ENCODE measurements at regions of chr12 and their contacts with region 1.

Region 1: GRCh38 chr12:120200364-120200800 is 529 bp downstream of the RPLP0 start:
- DNase-seq: no peak

Region 2: DNA sequence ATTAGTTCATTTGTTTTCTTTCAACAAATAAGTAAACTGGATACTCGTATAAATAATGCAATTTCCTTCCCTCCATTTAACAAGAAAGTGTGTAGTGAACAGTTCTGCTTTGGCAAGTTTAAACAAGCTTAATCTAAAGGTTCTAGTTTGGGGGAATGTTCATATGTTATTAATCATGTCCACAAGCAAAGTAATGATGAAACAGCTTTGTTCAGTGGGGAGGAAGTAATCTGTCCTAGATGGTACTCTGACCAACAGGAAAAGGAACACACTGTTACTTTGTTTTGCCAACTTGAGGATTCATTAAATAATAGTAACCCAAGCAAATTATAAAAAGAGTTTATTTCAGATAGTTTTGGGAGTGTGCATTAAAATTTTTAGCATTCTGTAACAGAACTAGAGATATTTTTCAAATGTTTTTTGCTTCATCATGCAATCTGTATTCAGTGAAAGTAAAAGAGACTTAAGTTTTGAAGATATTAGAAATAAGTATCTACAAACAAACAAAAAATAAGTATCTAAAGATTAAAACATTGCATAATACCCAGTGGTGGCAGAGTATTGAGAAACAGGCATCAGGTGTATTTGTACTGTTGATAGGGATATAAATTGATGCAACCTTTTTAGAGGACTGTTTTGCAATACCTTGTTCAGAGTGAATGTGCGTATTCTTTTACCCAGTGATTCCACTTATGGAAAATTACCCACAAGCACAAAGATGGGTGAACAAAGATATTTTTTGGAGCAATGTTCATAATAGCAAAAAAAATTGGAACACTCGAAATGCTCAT is 145.0 kb before region 1 on chr12:
- CTCF ChIA-PET with region 1: no interaction called
- POLR2A ChIA-PET with region 1: no interaction called
- DNase-seq: no peak

Region 3: DNA sequence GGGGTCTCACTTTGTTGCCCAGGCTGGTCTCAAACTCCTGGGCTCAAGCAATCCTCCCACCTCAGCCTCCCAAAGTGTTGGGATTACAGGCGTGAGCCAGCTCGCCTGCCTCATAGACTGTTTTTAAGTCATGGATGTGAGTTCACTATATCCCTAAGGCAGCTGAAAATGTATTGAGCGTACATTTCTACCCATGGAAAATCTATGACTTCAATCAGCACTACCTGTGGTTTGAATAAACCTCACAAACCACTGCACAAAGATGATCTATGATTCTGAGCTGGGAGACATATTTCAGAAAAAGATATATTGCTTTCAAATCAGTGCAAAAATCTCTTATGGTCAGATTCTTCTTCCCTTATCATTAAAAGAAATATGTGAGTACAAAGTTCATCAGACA is 28.3 kb before region 1 on chr12:
- CTCF ChIA-PET with region 1: interaction called, 3 read pairs
- POLR2A ChIA-PET with region 1: interaction called, 16 read pairs
- DNase-seq: no peak

Region 4: DNA sequence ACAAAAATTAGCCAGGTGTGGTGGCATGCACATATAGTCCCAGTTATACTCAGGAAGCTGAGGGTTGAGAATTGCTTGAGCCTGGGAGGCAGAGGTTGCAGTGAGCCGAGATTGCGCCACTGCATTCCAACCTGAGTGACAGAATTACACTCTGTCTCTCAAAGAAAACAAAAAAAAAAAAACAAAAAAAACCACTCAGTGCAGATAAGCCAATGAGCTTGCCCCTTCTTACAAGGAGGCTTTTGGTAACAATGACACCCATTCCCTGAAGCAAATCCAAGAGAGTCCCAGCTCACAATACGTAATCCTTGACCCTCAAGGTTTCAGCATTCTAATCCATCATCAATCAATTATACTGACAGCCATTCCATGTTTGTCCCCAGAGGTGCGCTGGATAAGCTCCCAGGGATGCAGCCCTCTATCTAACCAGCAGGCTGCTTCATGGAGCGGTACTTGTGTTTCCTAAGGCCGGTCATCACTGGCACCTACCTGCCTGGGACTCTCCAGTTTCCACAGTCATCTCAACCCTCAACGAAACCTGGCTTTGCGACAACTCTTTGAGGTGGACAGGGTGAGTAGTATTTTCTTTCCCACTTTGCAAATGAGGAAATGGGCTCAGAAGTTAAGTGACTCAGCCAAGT is 18.3 kb before region 1 on chr12:
- CTCF ChIA-PET with region 1: interaction called, 3 read pairs
- POLR2A ChIA-PET with region 1: interaction called, 58 read pairs
- DNase-seq: no peak

Region 5: GRCh38 chr12:120216742-120217605 is 16.6 kb after region 1 on chr12:
- CTCF ChIA-PET with region 1: interaction called, 3 read pairs
- POLR2A ChIA-PET with region 1: interaction called, 48 read pairs
- DNase-seq: no peak

Region 6: GRCh38 chr12:120234643-120235368 is 34.4 kb after region 1 on chr12:
- CTCF ChIA-PET with region 1: interaction called, 9 read pairs
- POLR2A ChIA-PET with region 1: interaction called, 185 read pairs
- DNase-seq: peak; percentile 73

Region 7: DNA sequence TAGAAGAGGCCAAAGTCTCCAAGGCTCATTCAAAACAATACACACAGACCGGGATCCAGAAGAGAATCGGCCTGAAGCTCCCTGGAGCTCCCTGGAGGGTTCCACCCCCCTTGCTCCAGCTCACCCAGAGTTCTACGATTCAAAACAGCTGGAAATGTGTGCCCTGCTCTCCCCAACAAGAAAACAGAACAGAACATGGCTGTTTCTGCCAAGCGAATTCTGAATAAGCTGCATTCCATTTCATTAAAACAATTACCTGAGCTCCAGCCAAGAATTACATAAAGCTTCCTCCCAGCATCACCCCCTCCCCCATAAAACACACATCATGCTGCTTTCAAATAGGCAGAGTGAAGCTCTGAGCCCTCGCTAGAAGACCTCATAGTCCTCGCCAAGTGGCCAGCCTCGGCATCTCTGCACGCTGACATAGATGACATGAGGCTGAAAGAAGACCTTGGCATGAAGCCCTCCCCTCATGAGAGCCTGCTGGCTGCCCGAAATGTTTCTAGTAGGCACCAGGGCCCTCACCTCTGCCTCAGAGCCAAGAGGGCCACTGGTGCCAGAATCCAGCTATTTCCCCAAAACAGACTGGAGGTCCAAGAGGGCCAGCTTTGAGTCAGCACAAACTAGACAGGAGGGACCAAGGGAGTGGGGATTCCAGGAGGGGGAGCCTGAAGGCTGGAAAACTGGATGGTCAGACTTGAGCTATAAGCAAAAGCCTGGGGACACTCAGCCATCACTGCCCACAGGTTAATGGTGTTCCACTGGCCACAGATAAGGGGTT is 56.8 kb after region 1 on chr12:
- CTCF ChIA-PET with region 1: no interaction called
- POLR2A ChIA-PET with region 1: interaction called, 72 read pairs
- DNase-seq: no peak

Region 8: GRCh38 chr12:120610560-120610959 is 410.2 kb after region 1 on chr12:
- CTCF ChIA-PET with region 1: no interaction called
- POLR2A ChIA-PET with region 1: no interaction called
- DNase-seq: no peak